HepG2 (cell line): ENCODE measurements at regions of chr12 and their contacts with region 1.

Region 1: GRCh38 chr12:53766881-53767280 is 15.1 kb upstream of the CISTR start:
- DNase-seq: no peak
- ATAC-seq: no peak
- H3K4me3 ChIP-seq: no peak overlapping the region
- H3K27ac ChIP-seq: no peak overlapping the region
- H3K4me1 ChIP-seq: no peaks in the 10 kb centered on the region
- H3K27me3 ChIP-seq: peaks cover 3 to 42% of the 10 kb centered on the region in 2 experiments; a peak in 3 of 5 replicates
- CTCF ChIP-seq: no peak
- EP300 ChIP-seq: no peak
- POLR2A ChIP-seq: no peak
- RAD21 ChIP-seq: no peak

Region 2: DNA sequence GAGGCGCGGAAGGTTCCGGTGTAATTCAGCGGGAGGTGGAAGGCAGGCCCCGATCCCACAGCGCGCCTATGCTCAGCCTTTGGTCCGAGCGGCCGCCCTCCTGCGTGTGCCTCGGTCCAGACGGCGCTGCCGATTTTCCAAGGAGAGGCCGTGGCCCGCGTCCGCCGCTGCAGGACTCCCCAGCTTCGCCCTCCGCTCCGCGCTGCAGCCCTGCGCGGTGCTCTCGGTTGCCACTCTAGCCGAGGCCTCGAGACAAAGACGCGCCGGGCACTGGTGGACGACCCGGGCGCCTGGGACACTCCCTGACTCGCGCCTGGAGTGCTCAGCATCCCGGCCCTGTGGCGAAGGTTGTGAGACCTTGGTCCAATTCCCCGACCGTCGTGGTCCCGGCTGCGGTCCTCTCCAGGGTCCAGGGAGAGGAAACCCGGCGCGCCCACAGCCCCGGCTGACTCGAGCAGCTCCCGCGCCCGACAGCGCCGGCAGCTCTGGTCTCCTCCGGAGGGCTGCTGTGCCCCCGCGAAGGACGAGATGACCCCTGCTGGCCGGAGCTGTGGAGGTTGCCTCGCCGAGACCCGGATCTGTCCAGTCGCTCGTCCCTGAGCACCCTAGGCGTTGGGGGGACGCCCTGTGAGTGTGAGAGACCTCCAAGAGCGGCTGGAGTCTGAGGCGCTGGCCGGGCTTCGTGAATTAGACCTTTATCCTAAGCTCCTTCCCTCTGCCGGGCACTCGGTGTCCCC is 194.3 kb after region 1 on chr12:
- CTCF ChIA-PET with region 1: interaction called, 20 read pairs
- POLR2A ChIA-PET with region 1: no interaction called
- in situ Hi-C with region 1: no loop called
- intact Hi-C with region 1: loop called (anchors 1 kb)
- DNase-seq: no peak
- ATAC-seq: peak; percentile 93
- H3K4me3 ChIP-seq: peak overlapping the region in 1 of 3 experiments; percentile 55; a peak in 1 of 6 replicates
- H3K27ac ChIP-seq: no peak overlapping the region
- H3K4me1 ChIP-seq: no peaks in the 10 kb centered on the region
- H3K27me3 ChIP-seq: peaks cover 20 to 95% of the 10 kb centered on the region in 2 experiments
- CTCF ChIP-seq: peak; percentile 64
- EP300 ChIP-seq: no peak
- POLR2A ChIP-seq: no peak
- RAD21 ChIP-seq: peak; percentile 82